Sciatic nerve (tissue), 2 donors: ENCODE measurements at regions of chr7 and their contacts with region 1.

Region 1: DNA sequence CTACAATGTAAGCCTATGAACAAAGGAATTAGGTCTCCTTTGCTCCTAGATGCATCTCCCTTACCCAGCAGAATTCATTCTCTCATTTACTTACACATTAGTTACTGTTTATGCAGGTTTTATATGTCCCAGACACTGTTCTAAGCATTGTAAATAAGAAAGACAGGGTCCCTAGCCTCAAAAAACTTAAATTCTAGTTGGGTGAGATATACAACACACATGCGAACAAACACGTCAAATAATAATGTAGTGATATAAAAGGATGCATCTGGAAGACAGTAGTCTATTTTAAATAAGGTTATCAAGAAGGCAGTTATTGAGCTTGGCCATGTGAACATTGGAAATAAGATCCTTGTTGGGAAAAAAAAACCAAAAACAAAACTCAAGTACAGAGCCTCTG is 479.7 kb downstream of the DNAJB9 start:
- DNase-seq: no peak
- ATAC-seq: no peak

Region 2: GRCh38 chr7:107622429-107622828 is 1426.9 kb before region 1 on chr7:
- intact Hi-C with region 1: no loop called
- DNase-seq: no peak
- ATAC-seq: peak; percentile 48

Region 3: DNA sequence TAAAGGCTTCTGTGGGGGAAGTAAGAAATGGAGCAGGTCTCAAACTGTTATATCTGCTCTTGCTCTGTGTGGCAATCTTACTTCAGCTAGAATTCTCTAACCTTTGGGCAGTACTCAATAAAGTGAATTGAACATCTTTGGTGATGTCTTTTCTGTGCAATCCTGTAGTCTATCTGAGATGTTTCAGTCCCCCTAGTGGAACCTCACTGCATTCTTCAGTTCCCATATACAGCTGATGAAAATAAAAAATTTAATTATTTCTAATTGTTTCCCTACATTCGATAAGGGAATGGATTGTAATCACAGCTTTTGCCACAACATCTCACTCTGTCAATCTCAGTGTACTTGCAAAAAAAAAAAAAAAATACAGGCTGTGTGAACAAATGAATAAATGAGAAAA is 42.9 kb after region 1 on chr7:
- intact Hi-C with region 1: loop called (anchors 1 kb)
- DNase-seq: no peak
- ATAC-seq: no peak

Region 4: DNA sequence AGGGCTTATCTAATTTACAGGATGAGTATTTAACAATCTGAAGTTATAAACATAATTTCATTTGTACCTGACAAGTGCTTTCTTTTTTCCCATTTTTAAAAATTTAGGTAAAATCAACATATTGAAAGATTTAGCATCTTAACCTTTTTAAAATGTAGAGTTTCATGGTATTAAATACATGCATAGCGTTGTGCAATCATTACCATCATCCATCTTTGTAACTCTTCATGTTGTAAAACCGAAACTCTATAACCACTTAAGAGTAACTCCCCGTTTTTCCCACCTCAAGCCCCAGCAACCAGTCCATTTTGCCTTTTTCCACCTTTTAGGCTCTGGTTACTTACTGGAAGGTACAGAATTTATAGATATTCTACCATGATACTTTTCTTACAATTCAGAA is 412.8 kb after region 1 on chr7:
- intact Hi-C with region 1: no loop called
- DNase-seq: no peak
- ATAC-seq: no peak

Region 5: GRCh38 chr7:109806548-109806947 is 757.2 kb after region 1 on chr7:
- intact Hi-C with region 1: no loop called
- DNase-seq: no peak
- ATAC-seq: no peak